Activated CD4-positive, alpha-beta T cell treated with anti-CD3 and anti-CD28 coated beads for 36 hours (primary cell): ENCODE measurements at regions of chr6 and their contacts with region 1.

Region 1: DNA sequence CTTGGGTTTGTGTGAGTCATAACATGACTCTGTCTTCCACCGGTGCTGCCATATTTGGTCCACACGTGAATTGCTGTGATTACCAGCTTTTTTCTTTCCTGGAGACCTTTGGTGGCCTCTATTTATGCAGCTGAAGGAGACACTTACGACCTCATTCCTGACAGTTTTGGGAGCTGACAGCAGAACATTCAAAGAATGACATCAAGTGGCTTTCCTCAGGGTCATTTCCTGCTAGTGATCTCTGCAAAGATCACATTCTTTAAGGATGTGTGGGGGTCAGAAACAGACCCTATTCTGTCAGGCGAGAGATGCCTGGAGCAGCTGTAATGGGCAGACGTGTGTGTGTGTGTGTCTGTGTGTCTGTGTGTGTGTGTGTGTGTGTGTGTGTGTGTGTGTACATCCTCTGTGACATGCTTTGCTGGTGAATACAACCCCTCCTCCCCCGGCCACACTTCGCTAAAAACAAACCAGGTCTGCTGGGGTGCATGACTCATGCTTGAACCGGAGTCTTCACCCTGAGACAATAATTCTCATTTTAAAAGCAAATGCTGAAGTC is 115.6 kb downstream of the TMEM170B start:
- DNase-seq: peak; percentile 76
- ATAC-seq: peak; percentile 90
- H3K4me3 Mint-ChIP-seq: no peak overlapping the region
- H3K27ac Mint-ChIP-seq: peak overlapping the region; percentile 19
- H3K4me1 Mint-ChIP-seq: peaks cover 11% of the 10 kb centered on the region
- H3K27me3 Mint-ChIP-seq: peaks cover 4% of the 10 kb centered on the region

Region 2: DNA sequence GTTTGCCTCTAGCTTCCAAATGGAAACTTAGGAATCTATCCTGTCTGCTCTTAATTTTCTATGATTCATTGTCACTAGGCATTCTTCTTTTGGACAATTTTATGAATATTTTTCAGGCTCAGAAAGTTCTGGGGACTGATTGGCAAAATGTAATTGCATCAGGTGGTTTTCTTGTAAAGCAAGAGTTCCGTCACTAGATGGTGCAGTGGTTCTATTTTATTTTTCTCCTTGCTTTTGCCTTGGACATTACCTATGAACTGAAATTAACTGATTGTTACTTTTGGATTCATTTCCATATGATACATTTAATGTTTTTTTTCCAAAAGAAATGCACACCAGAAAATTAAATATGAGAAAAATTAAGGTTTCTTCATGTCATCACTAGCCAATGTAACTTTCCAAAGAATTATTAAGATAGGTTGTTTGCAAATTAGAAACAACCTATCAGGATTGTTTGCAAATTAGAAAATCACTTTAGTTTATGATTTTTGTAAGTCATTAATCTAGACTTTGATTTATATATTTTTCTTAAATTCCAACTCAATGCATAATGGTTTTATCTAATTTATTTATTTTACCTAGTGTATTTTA is 67.6 kb before region 1 on chr6:
- CTCF ChIA-PET with region 1: interaction called, 3 read pairs
- POLR2A ChIA-PET with region 1: no interaction called
- intact Hi-C with region 1: loop called in 1 of 2 experiments (anchors 1 kb)
- DNase-seq: no peak
- ATAC-seq: no peak
- H3K4me3 Mint-ChIP-seq: no peak overlapping the region
- H3K27ac Mint-ChIP-seq: no peak overlapping the region
- H3K4me1 Mint-ChIP-seq: no peaks in the 10 kb centered on the region
- H3K27me3 Mint-ChIP-seq: peaks cover 2% of the 10 kb centered on the region

Region 3: DNA sequence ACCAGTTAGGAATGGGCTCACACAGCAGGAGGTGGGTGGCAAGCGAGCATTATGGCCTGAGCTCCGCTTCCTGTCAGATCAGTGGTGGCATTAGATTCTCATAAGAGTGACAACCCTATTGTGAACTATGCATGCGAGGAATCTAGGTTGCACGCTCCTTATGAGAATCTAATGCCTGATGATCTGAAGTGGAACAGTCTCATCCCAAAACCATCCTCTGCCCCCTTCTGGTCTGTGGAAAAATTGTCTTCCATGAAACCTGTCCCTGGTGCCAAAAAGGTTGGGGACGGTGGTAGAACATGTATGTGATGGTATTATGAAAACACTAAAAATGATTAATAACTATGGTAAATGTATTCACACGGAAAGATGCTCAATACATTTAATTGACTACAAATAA is 259.3 kb after region 1 on chr6:
- CTCF ChIA-PET with region 1: interaction called, 3 read pairs
- POLR2A ChIA-PET with region 1: no interaction called
- intact Hi-C with region 1: loop called in 1 of 2 experiments (anchors 2 kb)
- DNase-seq: no peak
- ATAC-seq: no peak
- H3K4me3 Mint-ChIP-seq: no peak overlapping the region
- H3K27ac Mint-ChIP-seq: no peak overlapping the region
- H3K4me1 Mint-ChIP-seq: peaks cover 11% of the 10 kb centered on the region
- H3K27me3 Mint-ChIP-seq: no peaks in the 10 kb centered on the region

Region 4: DNA sequence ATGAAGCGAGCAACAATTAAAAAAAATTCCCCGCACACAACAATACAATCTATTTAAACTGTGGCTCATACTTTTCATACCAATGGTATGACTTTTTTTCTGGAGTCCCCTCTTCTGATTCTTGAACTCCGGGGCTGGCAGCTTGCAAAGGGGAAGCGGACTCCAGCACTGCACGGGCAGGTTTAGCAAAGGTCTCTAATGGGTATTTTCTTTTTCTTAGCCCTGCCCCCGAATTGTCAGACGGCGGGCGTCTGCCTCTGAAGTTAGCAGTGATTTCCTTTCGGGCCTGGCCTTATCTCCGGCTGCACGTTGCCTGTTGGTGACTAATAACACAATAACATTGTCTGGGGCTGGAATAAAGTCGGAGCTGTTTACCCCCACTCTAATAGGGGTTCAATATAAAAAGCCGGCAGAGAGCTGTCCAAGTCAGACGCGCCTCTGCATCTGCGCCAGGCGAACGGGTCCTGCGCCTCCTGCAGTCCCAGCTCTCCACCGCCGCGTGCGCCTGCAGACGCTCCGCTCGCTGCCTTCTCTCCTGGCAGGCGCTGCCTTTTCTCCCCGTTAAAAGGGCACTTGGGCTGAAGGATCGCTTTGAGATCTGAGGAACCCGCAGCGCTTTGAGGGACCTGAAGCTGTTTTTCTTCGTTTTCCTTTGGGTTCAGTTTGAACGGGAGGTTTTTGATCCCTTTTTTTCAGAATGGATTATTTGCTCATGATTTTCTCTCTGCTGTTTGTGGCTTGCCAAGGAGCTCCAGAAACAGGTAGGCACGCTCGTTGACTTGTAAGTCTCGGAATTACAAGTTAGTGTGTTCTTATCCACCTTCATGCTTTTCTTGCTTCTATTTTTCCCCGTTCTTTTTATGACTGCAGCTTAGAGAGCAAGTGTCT is 637.1 kb after region 1 on chr6 and contains the start of gene EDN1:
- CTCF ChIA-PET with region 1: interaction called, 42 read pairs
- POLR2A ChIA-PET with region 1: no interaction called
- intact Hi-C with region 1: loop called (anchors 1 kb)
- DNase-seq: peak; percentile 82
- ATAC-seq: peak; percentile 94
- H3K4me3 Mint-ChIP-seq: peak within 1 kb of the TSS; percentile 74
- H3K27ac Mint-ChIP-seq: no peak within 1 kb of the TSS
- H3K4me1 Mint-ChIP-seq: peaks cover 15% of the 10 kb centered on the region
- H3K27me3 Mint-ChIP-seq: peaks cover 36% of the 10 kb centered on the region
- total RNA-seq, gene EDN1: not detected

Region 5: GRCh38 chr6:12605888-12606345 is 952.8 kb after region 1 on chr6:
- CTCF ChIA-PET with region 1: interaction called, 25 read pairs
- POLR2A ChIA-PET with region 1: no interaction called
- intact Hi-C with region 1: loop called (anchors 1 kb)
- DNase-seq: peak; percentile 68
- ATAC-seq: peak; percentile 81
- H3K4me3 Mint-ChIP-seq: no peak overlapping the region
- H3K27ac Mint-ChIP-seq: no peak overlapping the region
- H3K4me1 Mint-ChIP-seq: peaks cover 7% of the 10 kb centered on the region
- H3K27me3 Mint-ChIP-seq: peaks cover 22% of the 10 kb centered on the region

Region 6: GRCh38 chr6:12895721-12896120 is 1242.6 kb after region 1 on chr6:
- CTCF ChIA-PET with region 1: interaction called, 4 read pairs
- POLR2A ChIA-PET with region 1: no interaction called
- intact Hi-C with region 1: loop called (anchors 2 to 5 kb)
- DNase-seq: no peak
- ATAC-seq: no peak
- H3K4me3 Mint-ChIP-seq: no peak overlapping the region
- H3K27ac Mint-ChIP-seq: no peak overlapping the region
- H3K4me1 Mint-ChIP-seq: no peaks in the 10 kb centered on the region
- H3K27me3 Mint-ChIP-seq: peaks cover 13% of the 10 kb centered on the region